Activated CD4-positive, alpha-beta T cell treated with anti-CD3 and anti-CD28 coated beads for 36 hours (primary cell): ENCODE measurements at regions of chrX and their contacts with region 1.

Region 1: DNA sequence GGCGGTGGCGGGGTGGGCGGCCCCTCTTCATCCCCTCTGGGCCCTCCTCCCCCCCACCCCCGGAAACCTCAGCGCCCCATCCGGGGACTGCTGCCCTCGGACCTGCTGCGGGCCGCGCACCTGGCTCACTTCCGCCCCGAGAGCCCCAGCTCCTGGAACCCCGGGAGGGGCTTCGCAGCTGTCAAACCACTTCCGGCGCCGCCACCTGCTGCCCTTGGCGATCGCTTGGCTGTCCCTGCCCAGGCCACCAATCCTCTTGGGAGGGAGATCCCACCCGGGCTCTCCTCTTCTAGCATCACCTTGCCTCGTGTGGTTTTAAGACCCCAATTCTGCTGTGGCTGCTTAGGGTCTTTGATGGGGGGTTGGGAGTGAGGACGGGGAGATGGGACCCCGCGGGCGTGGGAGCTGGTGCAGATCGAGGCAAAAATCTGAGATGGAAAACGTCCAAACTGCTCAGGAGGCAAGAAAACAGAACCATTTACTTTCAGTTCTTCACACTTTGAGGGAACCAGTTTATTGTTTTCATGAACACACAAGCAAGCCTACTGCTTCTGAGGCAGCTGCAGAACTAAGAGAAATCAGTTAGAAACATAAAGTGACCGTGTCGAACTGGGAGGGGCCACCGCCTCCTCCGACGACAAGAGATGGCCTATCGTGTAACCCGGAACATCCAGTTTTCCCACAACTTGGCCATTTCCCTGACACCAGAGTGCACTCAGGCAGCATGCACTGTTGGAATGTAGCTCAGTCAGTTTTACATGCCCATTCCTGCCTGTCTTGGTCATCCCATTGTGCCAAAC is 779 bp downstream of the MTMR1 start:
- DNase-seq: peak; percentile 86
- ATAC-seq: peak; percentile 25
- H3K4me3 Mint-ChIP-seq: peak overlapping the region; percentile 88
- H3K27ac Mint-ChIP-seq: peak overlapping the region; percentile 98
- H3K4me1 Mint-ChIP-seq: peaks cover 61% of the 10 kb centered on the region
- H3K27me3 Mint-ChIP-seq: no peaks in the 10 kb centered on the region

Region 2: DNA sequence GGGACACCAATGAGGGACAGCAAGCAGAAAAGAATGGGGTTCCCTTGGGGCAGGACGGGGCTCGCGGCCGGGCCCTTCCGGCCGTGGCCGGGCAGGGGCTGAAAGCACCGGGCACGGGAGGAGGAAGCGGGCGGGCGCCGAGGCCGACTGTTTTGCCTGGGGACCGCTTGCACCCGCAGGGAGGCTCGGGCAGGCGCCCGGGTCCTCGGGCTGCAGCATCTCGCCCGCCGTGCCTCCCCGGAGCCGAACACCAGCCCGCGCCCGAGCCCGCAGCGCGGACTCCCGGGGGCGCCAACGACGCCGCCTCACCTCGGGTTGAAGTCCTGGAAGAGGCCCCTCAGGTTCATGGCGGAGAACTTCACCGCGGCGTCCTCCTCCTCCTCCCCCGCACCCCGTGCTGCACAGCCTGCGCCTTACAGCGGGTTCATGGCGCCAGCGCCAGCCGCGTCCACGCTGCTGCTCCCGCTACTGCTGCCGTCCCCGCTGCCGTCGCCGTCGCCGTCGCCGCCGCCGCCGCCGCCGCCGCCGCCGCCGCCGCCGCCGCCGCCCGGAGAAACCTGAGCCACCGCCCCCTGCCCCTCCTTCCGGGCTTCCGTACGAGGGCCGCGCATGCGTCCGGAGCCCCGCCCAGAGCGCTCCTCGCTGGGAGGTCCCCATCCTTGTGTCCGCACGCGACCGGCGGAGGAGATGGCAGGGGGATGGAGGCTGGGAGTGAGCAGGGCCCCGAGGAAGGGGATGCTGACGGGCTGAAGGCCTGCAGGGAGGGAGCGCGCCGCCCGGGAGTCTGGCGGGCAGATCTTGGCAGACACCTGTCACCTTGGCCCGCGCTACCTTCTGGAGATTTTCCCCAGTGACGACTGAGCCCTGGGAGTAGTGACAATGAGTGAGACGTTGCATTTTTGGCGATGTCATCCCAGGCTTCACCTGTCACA is 1062.5 kb before region 1 on chrX and contains the start of gene TMEM185A:
- CTCF ChIA-PET with region 1: no interaction called
- POLR2A ChIA-PET with region 1: no interaction called
- intact Hi-C with region 1: loop called in 1 of 2 experiments (anchors 10 kb)
- DNase-seq: peak; percentile 85
- ATAC-seq: peak; percentile 85
- H3K4me3 Mint-ChIP-seq: peak within 1 kb of the TSS; percentile 85
- H3K27ac Mint-ChIP-seq: peak within 1 kb of the TSS; percentile 88
- H3K4me1 Mint-ChIP-seq: peaks cover 37% of the 10 kb centered on the region
- H3K27me3 Mint-ChIP-seq: peaks cover 4% of the 10 kb centered on the region
- total RNA-seq, gene TMEM185A: 10.2 to 14.4 TPM

Region 3: GRCh38 chrX:150478496-150479492 is 215.2 kb before region 1 on chrX:
- CTCF ChIA-PET with region 1: interaction called, 3 read pairs
- POLR2A ChIA-PET with region 1: interaction called, 5 read pairs
- intact Hi-C with region 1: loop called (anchors 1 to 2 kb)
- DNase-seq: peak; percentile 56
- ATAC-seq: peak; percentile 60
- H3K4me3 Mint-ChIP-seq: peak overlapping the region; percentile 38
- H3K27ac Mint-ChIP-seq: peak overlapping the region; percentile 67
- H3K4me1 Mint-ChIP-seq: peaks cover 65% of the 10 kb centered on the region
- H3K27me3 Mint-ChIP-seq: no peaks in the 10 kb centered on the region

Region 4: DNA sequence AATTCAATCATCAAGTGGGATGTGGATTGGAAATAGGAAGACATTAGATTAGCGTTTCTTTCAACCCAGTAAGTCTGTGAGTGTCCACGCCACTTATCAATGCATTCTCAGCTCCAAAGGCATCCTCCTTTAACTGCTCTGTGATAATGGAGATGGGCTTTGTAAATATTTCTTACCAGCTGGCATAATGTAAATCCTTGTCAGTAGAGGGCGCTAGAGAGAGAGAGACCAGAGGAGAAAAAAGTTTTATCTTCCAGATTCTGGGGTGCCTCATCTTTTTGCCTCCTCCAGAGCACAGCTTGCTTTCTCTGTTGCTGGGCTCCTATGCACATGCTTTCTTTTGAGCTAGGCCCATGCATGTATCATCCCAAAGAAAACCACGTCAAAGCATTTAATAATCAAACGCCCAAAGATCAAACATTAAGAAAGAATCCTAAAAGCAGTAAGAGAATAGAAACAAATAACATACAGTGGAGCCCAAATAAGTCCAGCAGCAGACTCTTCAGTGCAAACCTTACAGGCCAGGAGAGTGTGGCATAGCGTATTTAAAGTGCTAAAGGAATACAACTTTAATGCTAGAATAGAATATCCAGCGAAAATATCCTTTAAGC is 10.3 kb before region 1 on chrX:
- CTCF ChIA-PET with region 1: interaction called, 13 read pairs
- POLR2A ChIA-PET with region 1: no interaction called
- intact Hi-C with region 1: no loop called
- DNase-seq: peak; percentile 9
- ATAC-seq: peak; percentile 53
- H3K4me3 Mint-ChIP-seq: no peak overlapping the region
- H3K27ac Mint-ChIP-seq: no peak overlapping the region
- H3K4me1 Mint-ChIP-seq: peaks cover 9% of the 10 kb centered on the region
- H3K27me3 Mint-ChIP-seq: no peaks in the 10 kb centered on the region

Region 5: GRCh38 chrX:150848914-150849365 is 155.0 kb after region 1 on chrX:
- CTCF ChIA-PET with region 1: no interaction called
- POLR2A ChIA-PET with region 1: no interaction called
- intact Hi-C with region 1: no loop called
- DNase-seq: peak; percentile 8
- ATAC-seq: peak; percentile 23
- H3K4me3 Mint-ChIP-seq: no peak overlapping the region
- H3K27ac Mint-ChIP-seq: no peak overlapping the region
- H3K4me1 Mint-ChIP-seq: peaks cover 9% of the 10 kb centered on the region
- H3K27me3 Mint-ChIP-seq: no peaks in the 10 kb centered on the region

Region 6: DNA sequence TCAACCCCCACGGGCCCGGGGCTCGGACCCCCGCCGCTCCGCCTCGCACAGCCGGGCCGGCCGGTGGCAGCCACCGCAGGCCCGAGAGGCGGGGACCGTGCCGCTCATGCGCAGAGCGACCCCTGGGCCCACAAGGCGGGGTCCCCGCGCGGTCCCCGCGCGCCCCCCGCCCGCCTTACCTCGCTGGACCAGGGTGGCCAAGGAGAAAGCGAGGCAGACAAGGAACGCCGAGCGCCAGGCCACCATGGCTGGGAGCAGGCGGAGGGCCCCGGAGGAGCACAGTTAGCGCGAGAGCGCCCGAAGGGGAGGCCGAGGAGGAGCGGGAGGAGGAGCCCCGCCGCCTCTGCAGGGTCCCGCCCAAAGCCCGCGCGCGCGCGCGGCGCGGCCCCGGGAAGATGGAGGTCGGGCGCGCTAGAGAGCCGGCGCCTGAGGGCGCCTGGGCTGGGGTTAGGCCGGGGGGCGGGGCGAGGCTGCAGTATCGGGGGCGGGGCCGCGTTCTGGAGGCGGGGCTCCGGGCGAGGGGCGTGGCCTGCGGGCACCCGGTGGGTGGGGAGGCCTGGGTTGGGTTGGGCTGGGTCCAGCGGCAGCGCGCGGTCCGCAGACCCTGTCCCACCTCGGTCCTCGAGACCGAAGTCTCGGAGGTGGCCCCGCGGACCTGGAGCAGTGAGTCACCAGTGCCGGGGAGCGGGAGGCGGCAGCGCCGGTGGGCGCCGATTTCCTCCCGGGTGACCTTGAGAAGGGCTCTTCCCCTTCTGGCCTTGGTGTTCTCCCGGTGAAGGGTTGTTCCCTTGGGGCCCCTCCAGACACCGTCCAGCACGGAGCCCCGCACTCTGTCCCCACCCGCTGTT is 204.6 kb after region 1 on chrX and contains the start of gene CD99L2:
- CTCF ChIA-PET with region 1: no interaction called
- POLR2A ChIA-PET with region 1: no interaction called
- intact Hi-C with region 1: loop called in 1 of 2 experiments (anchors 1 kb)
- DNase-seq: peak; percentile 93
- ATAC-seq: peak; percentile 95
- H3K4me3 Mint-ChIP-seq: peak within 1 kb of the TSS; percentile 74
- H3K27ac Mint-ChIP-seq: peak within 1 kb of the TSS; percentile 60
- H3K4me1 Mint-ChIP-seq: peaks cover 10% of the 10 kb centered on the region
- H3K27me3 Mint-ChIP-seq: no peaks in the 10 kb centered on the region
- total RNA-seq, gene CD99L2: 8.4 to 9.6 TPM